Right ventricle myocardium superior (tissue), 1 donor: ENCODE measurements at regions of chr22 and their contacts with region 1.

Region 1: GRCh38 chr22:39520054-39520891 is at the start of gene ATF4:
- DNase-seq: peak; percentile 98
- ATAC-seq: peak; percentile 92
- total RNA-seq, gene ATF4: 200 TPM

Region 2: DNA sequence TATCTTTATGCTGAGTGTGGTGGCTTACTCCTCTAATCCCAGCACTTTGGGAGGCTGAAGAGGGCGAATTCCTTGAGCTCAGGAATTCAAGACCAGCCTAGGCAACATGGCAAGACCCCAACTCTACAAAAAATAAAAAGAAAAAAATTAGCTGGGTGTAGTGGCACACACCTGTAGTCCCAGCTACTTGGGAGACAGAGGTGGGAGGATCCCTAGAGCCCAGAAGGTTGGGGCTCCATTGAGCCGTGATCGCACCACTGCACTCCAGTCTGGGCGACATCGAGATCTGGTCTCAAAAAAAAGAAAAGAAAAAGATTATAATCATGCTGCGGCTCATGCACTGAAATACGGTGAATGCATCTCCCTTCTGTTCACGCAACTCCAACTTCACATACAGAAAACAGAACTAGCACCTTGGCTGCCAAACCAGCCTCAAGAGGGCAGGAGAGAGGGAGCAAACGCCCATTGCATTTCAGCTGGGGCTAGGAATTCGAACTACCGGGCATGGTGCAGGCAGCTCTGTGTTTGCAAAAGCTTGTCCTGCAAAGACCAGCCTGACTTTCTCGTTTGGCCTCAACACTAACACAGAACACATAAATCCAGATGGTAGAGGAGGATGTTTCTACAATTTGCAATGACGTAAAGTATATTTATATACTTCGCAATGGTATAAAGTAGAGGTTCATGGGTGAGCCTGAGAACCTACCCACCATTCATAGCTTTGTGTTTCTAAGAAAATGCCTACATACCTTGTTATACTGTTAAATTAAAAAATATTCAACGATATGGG is 176.8 kb before region 1 on chr22:
- intact Hi-C with region 1: loop called (anchors 10 kb)
- DNase-seq: no peak
- ATAC-seq: peak; percentile 90